Pancreas (tissue), 10 donors: ENCODE measurements at regions of chr6 and their contacts with region 1.

Region 1: DNA sequence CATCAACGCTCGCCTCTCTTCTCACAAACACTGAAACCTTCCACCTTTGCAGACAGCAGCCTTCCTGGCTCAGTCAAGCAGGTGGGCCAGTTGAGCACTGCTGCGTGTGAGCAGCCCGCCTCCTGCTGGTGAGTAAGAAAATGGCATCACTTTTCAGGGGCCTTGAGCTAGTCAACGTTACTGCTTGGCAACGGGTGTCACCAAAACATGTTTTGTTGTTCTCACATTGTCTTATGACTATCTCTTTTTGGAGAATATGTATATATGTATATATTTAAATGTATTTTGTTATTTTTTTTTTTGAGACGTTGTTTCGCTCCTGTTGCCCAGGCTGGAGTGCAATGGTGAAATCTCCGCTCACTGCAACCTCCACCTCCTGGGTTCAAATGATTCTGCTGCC is 97.0 kb upstream of the AGPAT4 start:
- DNase-seq: peak; percentile 44 to 79 (median 67)
- ATAC-seq: peak; percentile 84 to 87 (median 87)
- H3K4me3 ChIP-seq: no peak overlapping the region
- H3K27ac ChIP-seq: no peak overlapping the region
- H3K4me1 ChIP-seq: no peaks in the 10 kb centered on the region
- H3K27me3 ChIP-seq: no peaks in the 10 kb centered on the region
- CTCF ChIP-seq: peak; percentile 64 to 85 (median 82)

Region 2: GRCh38 chr6:160733050-160733646 is 637.7 kb before region 1 on chr6:
- intact Hi-C with region 1: loop called (anchors 5 to 10 kb)
- DNase-seq: peak in 4 of 6 donors; percentile 16 to 58 (median 22)
- ATAC-seq: peak; percentile 70 to 96 (median 92)
- H3K4me3 ChIP-seq: no peak overlapping the region
- H3K27ac ChIP-seq: no peak overlapping the region
- H3K4me1 ChIP-seq: no peaks in the 10 kb centered on the region
- H3K27me3 ChIP-seq: no peaks in the 10 kb centered on the region
- CTCF ChIP-seq: peak in 3 of 4 donors; percentile 61 to 68 (median 62)

Region 3: DNA sequence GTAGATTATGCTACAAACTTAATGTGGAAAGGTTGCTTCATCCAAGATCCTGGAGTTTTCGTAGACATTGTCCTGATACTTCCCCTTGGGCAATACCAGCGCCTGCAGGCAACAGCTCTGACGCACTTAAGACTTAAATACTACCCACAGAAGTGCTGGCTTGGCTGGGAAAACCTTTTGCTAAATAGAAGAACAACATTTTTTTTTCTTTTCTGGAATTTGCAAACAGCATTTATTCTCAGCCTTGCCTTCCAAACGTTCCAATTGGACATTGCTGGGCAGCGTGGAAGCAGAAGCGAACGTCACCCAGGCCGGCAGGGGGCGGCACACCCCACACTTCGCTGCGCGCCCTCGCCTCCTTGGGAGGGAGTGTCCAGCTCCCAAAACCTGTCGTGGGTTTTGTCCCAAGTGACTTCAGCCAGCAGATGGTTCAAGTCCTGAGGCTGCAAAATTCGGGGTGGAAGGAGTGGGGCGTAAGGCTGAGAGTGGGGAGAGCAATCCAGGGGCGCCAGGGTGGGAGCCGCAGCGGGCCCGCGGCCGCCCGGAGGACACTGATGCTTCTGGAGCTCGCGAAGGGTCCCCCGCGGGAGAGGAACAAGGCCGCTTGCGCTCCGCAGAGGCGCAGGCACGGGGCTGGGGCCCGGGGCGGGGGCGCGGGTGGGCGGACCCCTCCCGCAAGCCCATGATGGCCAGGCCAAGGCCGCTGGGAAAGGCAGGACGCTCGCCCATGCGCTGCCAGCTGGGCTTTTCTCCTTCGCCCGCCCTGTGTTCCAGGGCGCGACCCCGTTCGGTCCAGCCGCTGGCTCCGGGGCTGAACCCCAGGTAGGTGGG is 440.1 kb before region 1 on chr6:
- intact Hi-C with region 1: loop called (anchors 5 to 10 kb)
- DNase-seq: peak; percentile 68 to 93 (median 84)
- ATAC-seq: peak; percentile 98 to 99 (median 99)
- H3K4me3 ChIP-seq: peak overlapping the region; percentile 26 to 66 (median 41)
- H3K27ac ChIP-seq: no peak overlapping the region
- H3K4me1 ChIP-seq: peaks cover 0 to 4% (median 0%) of the 10 kb centered on the region in 3 donors
- H3K27me3 ChIP-seq: no peaks in the 10 kb centered on the region
- CTCF ChIP-seq: peak; percentile 83 to 92 (median 91)

Region 4: GRCh38 chr6:161152907-161153662 is 217.8 kb before region 1 on chr6:
- intact Hi-C with region 1: loop called in 1 of 3 experiments (anchors 10 kb)
- DNase-seq: no peak
- ATAC-seq: peak in 3 of 4 donors; percentile 55 to 70 (median 70)
- H3K4me3 ChIP-seq: no peak overlapping the region
- H3K27ac ChIP-seq: no peak overlapping the region
- H3K4me1 ChIP-seq: no peaks in the 10 kb centered on the region
- H3K27me3 ChIP-seq: no peaks in the 10 kb centered on the region
- CTCF ChIP-seq: peak in 1 of 4 donors; percentile 12

Region 5: GRCh38 chr6:162416831-162417537 is 1046.1 kb after region 1 on chr6:
- intact Hi-C with region 1: no loop called
- DNase-seq: no peak
- ATAC-seq: no peak
- H3K4me3 ChIP-seq: no peak overlapping the region
- H3K27ac ChIP-seq: no peak overlapping the region
- H3K4me1 ChIP-seq: no peaks in the 10 kb centered on the region
- H3K27me3 ChIP-seq: no peaks in the 10 kb centered on the region
- CTCF ChIP-seq: no peak